ENCODE measurements at regions of chr7 and their contacts with region 1.

Region 1: DNA sequence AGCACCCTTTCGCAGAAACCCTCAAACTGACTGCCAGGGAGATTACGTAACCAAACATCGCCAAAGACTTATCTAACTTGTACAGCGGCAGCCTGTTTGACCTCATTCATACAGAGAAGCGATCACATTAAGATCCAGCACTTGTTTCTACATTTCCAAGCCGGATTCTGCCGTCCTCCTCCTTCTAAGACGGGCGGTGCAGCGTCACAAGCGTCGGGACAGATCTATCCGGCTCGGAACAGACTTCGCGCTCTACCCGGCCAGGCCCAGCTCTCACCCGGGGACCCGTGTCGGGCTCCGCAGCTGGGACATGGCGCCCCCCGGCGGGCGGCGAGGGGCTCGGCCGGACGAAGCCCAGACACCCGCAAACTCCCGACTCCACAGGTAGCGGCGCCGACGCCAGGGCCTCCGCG is 373 bp downstream of the H2AZ2 start:
- DNase-seq: peak; percentile 74 to 93 (median 91)
- H3K4me3 ChIP-seq: peak overlapping the region; percentile 86
- H3K4me3 Mint-ChIP-seq: peak overlapping the region; percentile 89 to 97 (median 96)
- H3K27ac ChIP-seq: peak overlapping the region; percentile 97
- H3K27ac Mint-ChIP-seq: peak overlapping the region; percentile 97 to 100 (median 99)
- H3K4me1 ChIP-seq: peaks cover 31% of the 10 kb centered on the region
- H3K4me1 Mint-ChIP-seq: peaks cover 35 to 38% (median 37%) of the 10 kb centered on the region in 3 donors
- H3K27me3 ChIP-seq: no peaks in the 10 kb centered on the region
- H3K27me3 Mint-ChIP-seq: peaks cover 0 to 11% of the 10 kb centered on the region in 2 donors

Region 2: GRCh38 chr7:44565097-44565794 is 282.3 kb before region 1 on chr7:
- CTCF ChIA-PET with region 1: interaction called, 10 read pairs
- POLR2A ChIA-PET with region 1: no interaction called
- DNase-seq: peak; percentile 43 to 73 (median 47)
- H3K4me3 ChIP-seq: no peak overlapping the region
- H3K4me3 Mint-ChIP-seq: peak overlapping the region in 1 of 7 donors; percentile 35
- H3K27ac ChIP-seq: peak overlapping the region; percentile 64
- H3K27ac Mint-ChIP-seq: peak overlapping the region in 7 of 8 donors; percentile 20 to 87 (median 60)
- H3K4me1 ChIP-seq: no peaks in the 10 kb centered on the region
- H3K4me1 Mint-ChIP-seq: peaks cover 7 to 13% (median 11%) of the 10 kb centered on the region in 3 donors
- H3K27me3 ChIP-seq: no peaks in the 10 kb centered on the region
- H3K27me3 Mint-ChIP-seq: peaks cover 0 to 2% of the 10 kb centered on the region in 2 donors

Region 3: DNA sequence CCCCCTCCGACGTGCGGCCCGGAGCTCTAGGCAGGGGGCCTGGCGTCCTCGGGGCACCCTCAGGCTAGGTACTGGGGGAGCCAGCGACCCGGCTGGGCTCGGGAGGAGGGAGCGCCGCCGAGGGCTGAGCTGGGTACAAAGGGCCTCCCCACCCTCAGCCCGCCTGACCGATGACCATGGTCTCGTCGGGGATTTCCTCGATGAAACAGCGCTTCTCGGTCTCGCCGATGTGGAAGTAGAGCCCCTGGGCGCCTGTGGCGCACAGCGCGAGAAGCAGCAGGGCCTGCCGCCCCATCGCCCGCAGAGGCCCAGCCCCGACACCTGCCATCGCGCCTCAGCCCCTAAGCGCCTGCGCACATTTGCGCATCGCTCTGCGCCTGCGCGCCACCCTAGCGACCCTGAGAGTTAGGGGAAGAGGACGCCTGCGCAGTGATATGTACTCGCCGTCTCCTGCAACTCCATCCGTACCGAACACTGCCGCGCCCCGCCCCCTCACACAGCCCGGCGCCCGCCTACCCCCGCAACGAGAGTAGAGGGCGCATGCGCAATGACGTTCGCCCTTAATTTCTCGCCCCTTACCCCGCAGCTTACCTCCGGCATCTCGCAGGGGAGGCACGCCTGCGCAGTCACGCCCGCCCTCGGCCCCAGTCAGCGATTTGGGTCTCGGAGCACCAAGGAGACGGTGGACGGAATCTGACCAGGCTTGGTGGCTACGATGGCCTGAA is 265.5 kb before region 1 on chr7 and contains the start of gene TMED4:
- CTCF ChIA-PET with region 1: interaction called, 18 read pairs
- POLR2A ChIA-PET with region 1: interaction called, 40 read pairs
- DNase-seq: peak; percentile 100
- H3K4me3 ChIP-seq: peak within 1 kb of the TSS; percentile 96
- H3K4me3 Mint-ChIP-seq: peak within 1 kb of the TSS; percentile 86 to 96 (median 90)
- H3K27ac ChIP-seq: peak within 1 kb of the TSS; percentile 99
- H3K27ac Mint-ChIP-seq: peak within 1 kb of the TSS; percentile 96 to 98 (median 97)
- H3K4me1 ChIP-seq: peaks cover 21% of the 10 kb centered on the region
- H3K4me1 Mint-ChIP-seq: peaks cover 19 to 49% (median 35%) of the 10 kb centered on the region in 3 donors
- H3K27me3 ChIP-seq: no peaks in the 10 kb centered on the region
- H3K27me3 Mint-ChIP-seq: peaks cover 0 to 3% of the 10 kb centered on the region in 2 donors
- total RNA-seq, gene TMED4: 78.8 to 80.5 TPM

Region 4: DNA sequence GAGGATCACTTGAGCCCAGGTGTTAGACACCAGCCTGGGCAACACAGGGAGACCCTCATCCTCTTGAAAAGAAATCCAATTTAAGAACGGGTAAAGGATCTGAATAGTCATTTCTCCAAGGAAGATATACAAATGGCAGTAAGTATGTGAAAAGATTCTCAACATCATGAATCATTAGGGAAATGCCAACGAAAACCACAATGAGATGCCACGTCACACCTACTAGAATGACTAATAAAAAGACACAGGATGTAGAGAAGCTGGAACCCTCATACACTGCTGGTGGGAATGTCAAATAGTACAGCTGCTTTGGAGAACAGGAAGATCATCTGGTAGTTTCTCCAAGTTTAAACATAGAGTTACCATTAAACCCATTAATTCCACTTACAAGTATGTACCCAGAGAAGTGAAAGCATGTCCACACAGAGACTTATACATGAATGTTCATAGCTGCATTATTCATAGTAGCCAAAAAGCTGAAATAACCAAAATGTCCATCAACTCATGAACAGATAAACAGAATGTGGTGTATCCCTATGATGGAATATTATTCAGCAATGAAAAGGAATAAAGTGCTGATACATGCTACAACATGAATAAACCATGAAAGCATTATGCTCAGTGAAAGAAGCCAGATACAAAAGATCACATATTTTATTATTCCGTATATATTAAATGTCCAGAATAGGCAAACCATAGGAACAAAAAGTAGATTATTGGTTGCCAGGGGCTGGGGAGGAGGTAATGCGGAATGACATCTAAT is 111.9 kb before region 1 on chr7:
- CTCF ChIA-PET with region 1: no interaction called
- POLR2A ChIA-PET with region 1: no interaction called
- DNase-seq: peak in 1 of 5 donors; percentile 54
- H3K4me3 ChIP-seq: no peak overlapping the region
- H3K4me3 Mint-ChIP-seq: no peak overlapping the region
- H3K27ac ChIP-seq: no peak overlapping the region
- H3K27ac Mint-ChIP-seq: peak overlapping the region in 2 of 8 donors; percentile 7 to 32
- H3K4me1 ChIP-seq: no peaks in the 10 kb centered on the region
- H3K4me1 Mint-ChIP-seq: peaks cover 7 to 12% (median 7%) of the 10 kb centered on the region in 3 donors
- H3K27me3 ChIP-seq: no peaks in the 10 kb centered on the region
- H3K27me3 Mint-ChIP-seq: no peaks in the 10 kb centered on the region

Region 5: GRCh38 chr7:44748045-44748947 is 99.2 kb before region 1 on chr7 and contains the start of gene ZMIZ2:
- CTCF ChIA-PET with region 1: interaction called, 12 read pairs
- POLR2A ChIA-PET with region 1: no interaction called
- DNase-seq: peak; percentile 86 to 93 (median 90)
- H3K4me3 ChIP-seq: peak within 1 kb of the TSS; percentile 54
- H3K4me3 Mint-ChIP-seq: peak within 1 kb of the TSS; percentile 79 to 90 (median 87)
- H3K27ac ChIP-seq: peak within 1 kb of the TSS; percentile 76
- H3K27ac Mint-ChIP-seq: peak within 1 kb of the TSS; percentile 87 to 97 (median 94)
- H3K4me1 ChIP-seq: peaks cover 38% of the 10 kb centered on the region
- H3K4me1 Mint-ChIP-seq: peaks cover 31 to 48% (median 44%) of the 10 kb centered on the region in 3 donors
- H3K27me3 ChIP-seq: no peaks in the 10 kb centered on the region
- H3K27me3 Mint-ChIP-seq: no peaks in the 10 kb centered on the region
- total RNA-seq, gene ZMIZ2: 119 to 122 TPM

Region 6: DNA sequence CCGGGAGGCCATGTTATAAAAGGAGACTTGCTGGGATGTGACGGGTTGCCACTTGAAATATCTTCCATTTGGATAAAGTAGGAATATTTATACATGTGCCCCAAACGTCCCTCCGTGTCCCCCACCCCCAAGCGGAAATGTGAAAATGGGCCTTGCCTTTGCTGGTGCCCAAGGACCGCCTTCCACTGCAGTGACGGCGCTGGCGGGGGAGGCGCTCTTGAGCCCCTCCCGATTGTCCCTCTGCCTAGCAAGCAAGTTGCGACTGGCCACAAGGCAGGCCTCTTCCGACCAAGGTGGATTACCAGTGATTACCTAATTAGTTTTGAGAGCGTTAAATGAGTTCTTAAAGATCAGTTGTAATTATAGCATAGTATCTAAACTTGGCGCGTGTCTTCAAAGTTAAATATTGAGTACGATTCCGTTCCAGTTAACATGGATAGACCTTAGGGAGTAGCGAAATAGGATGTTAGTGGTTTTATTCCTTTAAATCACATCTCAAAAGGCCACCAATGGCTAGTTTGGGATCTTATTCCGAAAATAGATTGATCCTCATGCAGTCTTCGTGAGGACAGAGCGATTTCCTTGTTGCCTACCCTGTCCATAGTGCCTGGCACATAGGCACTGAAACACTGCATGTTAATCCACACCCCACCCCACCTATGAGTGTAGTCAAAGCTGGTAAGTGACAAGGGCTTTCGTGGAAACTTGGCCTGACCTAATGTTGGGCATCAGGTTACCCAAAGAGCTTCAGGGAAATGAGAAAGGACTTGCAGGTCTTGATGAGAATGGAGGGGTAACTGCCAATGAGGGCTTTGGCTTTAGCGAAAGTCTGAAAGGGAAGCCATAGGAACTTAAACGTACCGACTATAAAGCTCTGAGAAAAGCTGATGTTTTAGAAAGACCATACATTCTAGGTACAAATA is 49.9 kb before region 1 on chr7:
- CTCF ChIA-PET with region 1: interaction called, 6 read pairs
- POLR2A ChIA-PET with region 1: interaction called, 32 read pairs
- DNase-seq: peak; percentile 73 to 91 (median 80)
- H3K4me3 ChIP-seq: peak overlapping the region; percentile 72
- H3K4me3 Mint-ChIP-seq: peak overlapping the region; percentile 90 to 99 (median 92)
- H3K27ac ChIP-seq: peak overlapping the region; percentile 98
- H3K27ac Mint-ChIP-seq: peak overlapping the region; percentile 94 to 99 (median 98)
- H3K4me1 ChIP-seq: peaks cover 19% of the 10 kb centered on the region
- H3K4me1 Mint-ChIP-seq: peaks cover 34 to 51% (median 41%) of the 10 kb centered on the region in 3 donors
- H3K27me3 ChIP-seq: no peaks in the 10 kb centered on the region
- H3K27me3 Mint-ChIP-seq: peaks cover 0 to 5% of the 10 kb centered on the region in 2 donors

Region 7: DNA sequence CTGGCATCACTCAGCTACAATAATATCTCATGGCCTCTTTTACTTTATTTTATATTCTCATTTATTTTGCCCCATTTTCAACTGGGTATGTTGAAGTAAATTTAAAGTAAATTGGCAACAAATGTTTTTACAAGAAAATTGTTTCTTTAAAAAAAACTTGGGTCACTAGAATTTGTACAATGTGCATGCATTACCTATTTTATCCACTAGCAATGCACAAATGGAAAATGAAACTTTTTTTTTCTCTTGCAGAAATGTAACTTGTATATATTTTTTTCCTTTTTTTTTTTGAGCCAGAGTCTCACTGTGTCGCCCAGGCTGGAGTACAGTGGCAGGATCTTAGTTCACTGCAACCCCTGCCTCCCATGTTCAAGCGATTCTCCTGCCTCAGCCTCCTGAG is 10.6 kb after region 1 on chr7:
- CTCF ChIA-PET with region 1: interaction called, 28 read pairs
- POLR2A ChIA-PET with region 1: interaction called, 7 read pairs
- DNase-seq: no peak
- H3K4me3 ChIP-seq: no peak overlapping the region
- H3K4me3 Mint-ChIP-seq: no peak overlapping the region
- H3K27ac ChIP-seq: no peak overlapping the region
- H3K27ac Mint-ChIP-seq: no peak overlapping the region
- H3K4me1 ChIP-seq: no peaks in the 10 kb centered on the region
- H3K4me1 Mint-ChIP-seq: peaks cover 3 to 6% (median 5%) of the 10 kb centered on the region in 3 donors
- H3K27me3 ChIP-seq: no peaks in the 10 kb centered on the region
- H3K27me3 Mint-ChIP-seq: peaks cover 0 to 12% of the 10 kb centered on the region in 2 donors

Region 8: GRCh38 chr7:45129181-45129800 is 281.8 kb after region 1 on chr7:
- CTCF ChIA-PET with region 1: no interaction called
- POLR2A ChIA-PET with region 1: no interaction called
- DNase-seq: no peak
- H3K4me3 ChIP-seq: no peak overlapping the region
- H3K4me3 Mint-ChIP-seq: no peak overlapping the region
- H3K27ac ChIP-seq: no peak overlapping the region
- H3K27ac Mint-ChIP-seq: peak overlapping the region in 3 of 8 donors; percentile 33 to 81 (median 79)
- H3K4me1 ChIP-seq: no peaks in the 10 kb centered on the region
- H3K4me1 Mint-ChIP-seq: no peaks in the 10 kb centered on the region
- H3K27me3 ChIP-seq: no peaks in the 10 kb centered on the region
- H3K27me3 Mint-ChIP-seq: no peaks in the 10 kb centered on the region